ENCODE measurements at regions of chr3 and their contacts with region 1.

Region 1: DNA sequence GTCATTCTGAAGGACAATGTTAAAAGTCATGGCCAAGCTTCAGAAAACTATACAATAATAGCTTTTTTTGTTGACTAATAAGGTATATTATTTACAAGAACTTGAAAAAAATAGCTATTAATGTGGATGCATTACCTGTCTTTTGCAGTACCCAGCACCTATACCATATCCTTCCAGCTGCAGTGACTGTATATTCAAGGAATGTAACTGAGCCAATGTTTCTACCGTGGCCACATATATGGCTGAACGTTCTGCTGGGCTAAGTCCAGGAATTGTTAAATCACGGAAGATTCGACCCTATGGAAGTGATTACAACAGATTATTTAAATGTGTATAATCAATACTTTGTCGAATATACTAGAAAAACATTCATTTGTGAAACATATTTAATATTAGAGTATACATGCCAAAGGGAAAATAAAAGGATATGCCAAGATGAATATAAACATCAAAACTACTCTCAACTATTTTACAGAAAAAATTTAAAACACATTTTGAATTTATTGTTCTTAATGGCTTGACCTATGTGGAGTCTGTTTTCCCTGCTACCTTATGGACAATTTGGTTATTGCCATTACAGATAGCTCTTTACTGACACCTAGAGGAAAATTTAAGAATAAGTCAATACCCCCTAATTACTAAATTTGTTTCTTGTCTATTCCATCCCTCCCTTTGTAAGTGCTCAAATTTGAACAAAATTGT is 17.6 kb downstream of the ACAD11 start:
- DNase-seq: peak; percentile 72
- H3K4me3 ChIP-seq: no peak overlapping the region
- H3K27ac ChIP-seq: no peak overlapping the region
- H3K4me1 ChIP-seq: peaks cover 29% of the 10 kb centered on the region
- H3K27me3 ChIP-seq: no peaks in the 10 kb centered on the region
- CTCF ChIP-seq: peak; percentile 37 to 45
- POLR2A ChIP-seq: no peak

Region 2: DNA sequence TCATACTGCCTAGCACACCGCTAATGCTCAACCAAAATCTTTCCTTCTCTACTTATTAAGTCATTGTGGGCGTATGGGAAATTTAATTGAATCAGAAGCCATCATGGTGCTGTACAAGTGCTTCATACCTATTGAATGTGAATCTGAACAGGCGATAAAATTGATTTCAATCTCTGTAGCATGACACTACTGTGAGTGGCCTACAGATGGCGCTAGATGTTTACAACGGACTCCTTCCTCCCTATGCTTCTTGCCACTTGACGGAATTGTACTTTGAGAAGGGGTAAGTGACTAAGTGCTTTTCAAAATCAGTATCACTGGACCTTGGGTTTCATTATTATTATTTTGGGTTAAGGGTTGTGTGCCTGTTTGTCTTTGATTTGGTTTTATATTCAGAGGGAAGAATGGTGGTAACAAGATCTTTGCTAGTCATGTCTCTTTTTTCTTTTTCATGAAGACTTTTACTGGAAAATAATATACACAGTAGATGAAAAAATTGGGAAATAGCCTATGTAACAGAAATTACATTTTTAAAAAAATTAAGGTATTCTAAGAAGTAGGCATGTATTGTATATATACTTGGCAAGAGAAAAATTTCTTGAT is 289.3 kb before region 1 on chr3:
- CTCF ChIA-PET with region 1: interaction called, 3 read pairs
- POLR2A ChIA-PET with region 1: no interaction called
- dilution Hi-C with region 1: no loop called
- intact Hi-C with region 1: loop called (anchors 2 kb)
- DNase-seq: peak; percentile 77
- H3K4me3 ChIP-seq: no peak overlapping the region
- H3K27ac ChIP-seq: no peak overlapping the region
- H3K4me1 ChIP-seq: no peaks in the 10 kb centered on the region
- H3K27me3 ChIP-seq: peaks cover 0 to 4% of the 10 kb centered on the region in 2 experiments
- CTCF ChIP-seq: peak; percentile 78 to 84
- POLR2A ChIP-seq: no peak

Region 3: DNA sequence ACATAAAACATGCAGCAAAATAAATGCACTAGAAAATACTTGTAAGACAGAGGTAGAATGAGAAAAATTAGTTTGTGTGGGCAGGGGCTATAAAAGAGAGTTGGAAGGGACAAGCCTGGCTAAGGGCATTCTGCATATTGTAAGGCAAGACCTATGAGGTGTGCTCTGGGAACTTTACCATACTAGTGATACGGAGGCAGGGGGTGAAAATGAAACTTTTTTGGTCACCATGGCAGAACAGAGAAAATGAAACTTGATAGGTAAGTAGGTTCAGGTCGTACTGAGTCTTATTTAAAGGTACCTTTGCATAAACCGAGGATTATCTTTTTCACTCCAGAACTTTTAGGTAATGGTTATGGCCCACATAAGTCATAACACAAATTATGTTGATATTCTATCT is 119.6 kb before region 1 on chr3:
- CTCF ChIA-PET with region 1: interaction called, 11 read pairs
- POLR2A ChIA-PET with region 1: no interaction called
- dilution Hi-C with region 1: loop called (anchors 25 kb)
- intact Hi-C with region 1: no loop called
- DNase-seq: no peak
- H3K4me3 ChIP-seq: no peak overlapping the region
- H3K27ac ChIP-seq: no peak overlapping the region
- H3K4me1 ChIP-seq: no peaks in the 10 kb centered on the region
- H3K27me3 ChIP-seq: no peaks in the 10 kb centered on the region
- CTCF ChIP-seq: no peak
- POLR2A ChIP-seq: no peak

Region 4: GRCh38 chr3:132535575-132536441 is 106.2 kb before region 1 on chr3:
- CTCF ChIA-PET with region 1: interaction called, 423 read pairs
- POLR2A ChIA-PET with region 1: interaction called, 4 read pairs
- dilution Hi-C with region 1: loop called (anchors 25 kb)
- intact Hi-C with region 1: loop called (anchors 1 kb)
- DNase-seq: peak; percentile 85
- H3K4me3 ChIP-seq: no peak overlapping the region
- H3K27ac ChIP-seq: no peak overlapping the region
- H3K4me1 ChIP-seq: peaks cover 6% of the 10 kb centered on the region
- H3K27me3 ChIP-seq: no peaks in the 10 kb centered on the region
- CTCF ChIP-seq: peak; percentile 37 to 50
- POLR2A ChIP-seq: no peak

Region 5: GRCh38 chr3:132549890-132550578 is 92.0 kb before region 1 on chr3:
- CTCF ChIA-PET with region 1: interaction called, 30 read pairs
- POLR2A ChIA-PET with region 1: no interaction called
- dilution Hi-C with region 1: loop called (anchors 25 kb)
- intact Hi-C with region 1: no loop called
- DNase-seq: peak; percentile 76
- H3K4me3 ChIP-seq: no peak overlapping the region
- H3K27ac ChIP-seq: peak overlapping the region; percentile 7
- H3K4me1 ChIP-seq: peaks cover 37% of the 10 kb centered on the region
- H3K27me3 ChIP-seq: no peaks in the 10 kb centered on the region
- CTCF ChIP-seq: no peak
- POLR2A ChIP-seq: no peak

Region 6: GRCh38 chr3:132629928-132630327 is 12.1 kb before region 1 on chr3:
- CTCF ChIA-PET with region 1: interaction called, 15 read pairs
- POLR2A ChIA-PET with region 1: no interaction called
- dilution Hi-C with region 1: no loop called
- intact Hi-C with region 1: no loop called
- DNase-seq: peak; percentile 76
- H3K4me3 ChIP-seq: no peak overlapping the region
- H3K27ac ChIP-seq: peak overlapping the region; percentile 91
- H3K4me1 ChIP-seq: peaks cover 13% of the 10 kb centered on the region
- H3K27me3 ChIP-seq: no peaks in the 10 kb centered on the region
- CTCF ChIP-seq: no peak
- POLR2A ChIP-seq: no peak

Region 7: GRCh38 chr3:132669256-132669777 is 27.3 kb after region 1 on chr3:
- CTCF ChIA-PET with region 1: interaction called, 13 read pairs
- POLR2A ChIA-PET with region 1: no interaction called
- dilution Hi-C with region 1: no loop called
- intact Hi-C with region 1: no loop called
- DNase-seq: peak; percentile 45
- H3K4me3 ChIP-seq: no peak overlapping the region
- H3K27ac ChIP-seq: no peak overlapping the region
- H3K4me1 ChIP-seq: peaks cover 26% of the 10 kb centered on the region
- H3K27me3 ChIP-seq: no peaks in the 10 kb centered on the region
- CTCF ChIP-seq: no peak
- POLR2A ChIP-seq: no peak

Measured in endothelial cell of umbilical vein (primary cell).